GM10248 (cell line): ENCODE measurements at regions of chr1 and their contacts with region 1.

Region 1: GRCh38 chr1:245045087-245045881 is 109.5 kb upstream of the KIF26B start:
- DNase-seq: no peak
- CTCF ChIP-seq: no peak

Region 2: DNA sequence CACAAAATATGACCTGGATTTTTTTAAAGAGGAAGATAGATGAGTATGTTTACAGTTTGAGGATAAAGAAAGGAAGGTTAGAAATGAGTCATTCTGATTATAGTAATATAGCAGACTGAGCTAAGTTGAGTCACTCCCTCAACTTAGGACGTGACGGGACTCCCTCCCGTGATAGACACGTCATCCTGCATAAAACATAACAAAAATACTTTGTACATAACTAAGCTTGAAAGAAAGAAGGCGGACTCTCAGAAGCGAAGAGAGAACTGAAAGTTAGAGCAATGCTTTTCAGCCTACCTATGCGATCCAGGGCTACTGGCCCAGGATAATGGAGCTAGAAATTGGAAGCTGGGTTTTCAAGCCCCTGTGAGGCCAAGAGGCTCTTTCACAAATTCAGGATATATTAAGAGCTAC is 445.3 kb before region 1 on chr1:
- CTCF ChIA-PET with region 1: interaction called, 31 read pairs
- POLR2A ChIA-PET with region 1: no interaction called
- DNase-seq: peak; percentile 72
- CTCF ChIP-seq: no peak

Region 3: DNA sequence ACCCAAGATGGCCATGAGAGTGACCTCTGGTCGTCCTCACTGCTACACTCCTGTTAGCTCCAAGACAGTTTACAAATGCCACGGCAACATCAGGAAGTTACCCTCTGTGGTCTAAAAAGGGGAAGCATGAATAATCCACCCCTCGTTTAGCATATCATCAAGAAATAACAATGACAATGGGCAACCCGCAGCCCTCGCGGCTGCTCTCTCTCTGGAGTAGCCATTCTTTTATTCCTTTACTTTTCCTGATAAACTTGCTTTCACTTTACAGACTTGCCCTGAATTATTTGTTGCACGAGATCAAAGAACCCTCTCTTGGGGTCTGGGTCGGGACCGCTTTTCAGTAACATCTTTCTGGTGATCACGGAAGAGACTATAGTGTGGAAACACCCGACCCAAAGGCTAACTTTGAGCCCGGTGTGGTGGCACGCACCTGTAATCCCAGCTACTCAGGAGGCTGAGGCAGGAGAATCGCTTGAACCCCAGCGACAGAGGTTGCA is 229.6 kb before region 1 on chr1:
- CTCF ChIA-PET with region 1: interaction called, 13 read pairs
- POLR2A ChIA-PET with region 1: no interaction called
- DNase-seq: no peak
- CTCF ChIP-seq: no peak

Region 4: DNA sequence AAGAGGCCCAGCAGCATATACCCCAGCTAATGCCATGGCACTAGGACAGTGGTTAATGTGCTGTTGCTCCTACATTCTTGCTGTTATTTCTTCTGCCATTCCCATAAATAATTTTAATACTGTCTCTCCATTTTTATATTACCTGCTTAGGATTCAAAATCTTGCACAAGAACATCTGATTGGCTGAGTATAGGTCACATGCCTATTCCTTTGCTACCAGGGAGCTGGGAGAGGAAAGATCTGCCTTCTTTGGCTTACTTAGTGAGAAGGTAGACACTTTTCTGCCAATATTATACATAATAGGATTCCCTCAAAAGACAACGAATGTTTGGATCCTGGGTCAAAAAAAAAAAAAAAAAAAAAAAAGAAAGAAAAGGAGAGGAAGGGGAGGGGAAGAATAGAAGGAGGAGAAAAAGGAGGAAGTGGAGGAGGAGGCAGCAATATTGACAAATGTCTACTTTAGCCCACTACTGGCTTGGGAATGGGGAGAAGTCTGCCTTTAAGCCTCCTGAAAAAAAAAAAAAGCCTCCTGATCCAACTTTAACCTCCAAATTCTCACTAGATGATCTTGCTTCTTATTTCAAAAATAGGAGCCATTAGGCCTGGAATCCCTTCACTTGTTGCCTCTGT is 46.5 kb before region 1 on chr1:
- CTCF ChIA-PET with region 1: interaction called, 12 read pairs
- POLR2A ChIA-PET with region 1: no interaction called
- DNase-seq: no peak
- CTCF ChIP-seq: no peak

Region 5: GRCh38 chr1:245019910-245020486 is 25.3 kb before region 1 on chr1:
- CTCF ChIA-PET with region 1: interaction called, 27 read pairs
- POLR2A ChIA-PET with region 1: no interaction called
- DNase-seq: no peak
- CTCF ChIP-seq: no peak

Region 6: GRCh38 chr1:245060684-245061374 is 15.5 kb after region 1 on chr1:
- CTCF ChIA-PET with region 1: interaction called, 58 read pairs
- POLR2A ChIA-PET with region 1: no interaction called
- DNase-seq: no peak
- CTCF ChIP-seq: no peak